ENCODE measurements at regions of chr22 and their contacts with region 1.

Region 1: GRCh38 chr22:41666661-41667258 is 21.9 kb downstream of the SNU13 start:
- DNase-seq: peak; percentile 96
- H3K4me3 Mint-ChIP-seq: peak overlapping the region; percentile 86
- H3K27ac Mint-ChIP-seq: peak overlapping the region; percentile 98
- H3K4me1 Mint-ChIP-seq: peaks cover 21% of the 10 kb centered on the region
- H3K27me3 Mint-ChIP-seq: no peaks in the 10 kb centered on the region

Region 2: GRCh38 chr22:41589391-41590241 is 77.1 kb before region 1 on chr22 and contains the start of gene PMM1:
- CTCF ChIA-PET with region 1: interaction called, 13 read pairs
- POLR2A ChIA-PET with region 1: no interaction called
- DNase-seq: peak; percentile 100
- H3K4me3 Mint-ChIP-seq: peak within 1 kb of the TSS; percentile 96
- H3K27ac Mint-ChIP-seq: peak within 1 kb of the TSS; percentile 87
- H3K4me1 Mint-ChIP-seq: peaks cover 26% of the 10 kb centered on the region
- H3K27me3 Mint-ChIP-seq: no peaks in the 10 kb centered on the region
- total RNA-seq, gene PMM1: 44.4 to 46.2 TPM

Region 3: GRCh38 chr22:41656556-41656955 is 10.2 kb before region 1 on chr22:
- CTCF ChIA-PET with region 1: interaction called, 16 read pairs
- POLR2A ChIA-PET with region 1: interaction called, 11 read pairs
- DNase-seq: no peak
- H3K4me3 Mint-ChIP-seq: no peak overlapping the region
- H3K27ac Mint-ChIP-seq: no peak overlapping the region
- H3K4me1 Mint-ChIP-seq: peaks cover 7% of the 10 kb centered on the region
- H3K27me3 Mint-ChIP-seq: no peaks in the 10 kb centered on the region

Region 4: DNA sequence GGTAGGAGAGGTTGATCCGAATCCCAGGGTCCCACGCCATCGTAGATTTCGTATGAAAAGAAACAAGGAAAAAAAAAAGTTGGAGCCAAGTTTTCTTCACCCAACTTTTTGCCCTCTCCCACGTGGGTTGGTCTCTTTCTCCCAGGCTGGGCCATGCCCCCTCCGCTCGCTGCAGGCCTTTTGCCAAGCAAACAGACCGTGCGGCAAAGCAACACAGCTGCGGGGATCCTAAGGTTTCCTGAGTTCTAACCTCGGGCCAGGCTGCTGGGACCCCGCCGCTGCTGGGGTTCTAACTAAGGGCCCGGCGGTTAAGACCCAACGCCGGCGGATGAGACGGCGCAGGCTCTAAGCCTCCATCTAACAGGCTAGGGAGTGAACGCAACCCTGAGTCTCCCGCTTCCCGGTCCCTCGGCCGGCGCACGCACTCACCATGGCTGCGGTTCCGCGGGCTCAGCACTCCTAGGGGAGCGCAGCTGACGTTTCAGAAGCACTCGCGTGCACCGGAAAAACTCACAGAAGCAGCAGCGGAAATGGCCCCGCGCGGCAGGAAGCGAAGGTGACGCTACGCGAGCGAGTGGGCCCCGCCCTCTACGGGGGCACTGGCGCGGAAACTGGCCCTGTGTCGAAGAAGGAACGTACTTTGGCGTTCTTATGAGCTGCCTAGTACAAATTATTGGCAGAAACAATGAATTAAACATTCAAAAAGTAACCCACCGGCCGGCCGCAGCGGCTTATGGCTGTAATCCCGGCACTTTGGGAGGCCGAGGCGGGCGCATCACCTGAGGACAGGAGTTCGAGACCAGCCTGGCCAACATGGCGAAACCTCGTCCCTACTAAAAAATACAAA is 21.8 kb after region 1 on chr22 and contains the start of gene SNU13:
- CTCF ChIA-PET with region 1: interaction called, 55 read pairs
- POLR2A ChIA-PET with region 1: interaction called, 76 read pairs
- DNase-seq: peak; percentile 95
- H3K4me3 Mint-ChIP-seq: peak within 1 kb of the TSS; percentile 95
- H3K27ac Mint-ChIP-seq: peak within 1 kb of the TSS; percentile 92
- H3K4me1 Mint-ChIP-seq: peaks cover 40% of the 10 kb centered on the region
- H3K27me3 Mint-ChIP-seq: no peaks in the 10 kb centered on the region
- total RNA-seq, gene SNU13: 166 to 176 TPM

Region 5: DNA sequence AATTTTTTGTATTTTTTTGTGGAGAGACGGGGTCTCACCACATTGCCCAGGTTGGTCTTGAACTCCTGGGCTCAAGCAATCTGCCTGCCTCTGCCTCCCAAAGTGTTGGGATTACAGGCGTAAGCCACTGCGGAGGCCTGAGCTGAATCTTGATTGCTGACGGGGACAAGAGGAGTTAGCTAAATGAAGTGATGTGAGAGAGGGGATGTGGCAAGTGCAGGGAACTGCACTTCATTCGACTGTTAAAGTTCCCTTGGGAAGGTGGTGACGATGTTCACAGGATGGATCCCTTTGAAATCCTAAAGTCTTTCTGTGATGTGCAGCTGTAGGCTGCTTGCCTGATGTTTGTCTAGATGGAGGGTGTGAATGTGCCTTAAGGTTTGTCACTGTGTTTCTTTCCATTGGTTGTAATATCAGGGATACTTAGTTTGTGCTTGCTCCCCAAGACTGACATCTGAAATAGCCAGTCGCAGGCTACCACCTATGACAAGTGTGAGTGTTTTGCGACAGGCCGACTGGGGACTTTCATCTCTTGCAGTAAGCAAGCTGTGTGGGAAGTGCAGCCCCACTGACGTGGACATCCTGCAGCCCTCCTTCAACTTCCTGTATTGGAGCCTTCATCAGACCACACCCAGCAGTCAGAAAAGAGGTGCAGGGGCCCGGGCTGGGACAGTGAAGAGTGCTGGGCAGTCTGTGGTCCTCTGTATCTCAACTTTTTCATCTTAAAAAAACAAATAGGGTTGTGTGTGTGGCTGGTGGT is 114.2 kb after region 1 on chr22:
- CTCF ChIA-PET with region 1: interaction called, 20 read pairs
- POLR2A ChIA-PET with region 1: interaction called, 10 read pairs
- DNase-seq: peak; percentile 96
- H3K4me3 Mint-ChIP-seq: peak overlapping the region; percentile 85
- H3K27ac Mint-ChIP-seq: peak overlapping the region; percentile 97
- H3K4me1 Mint-ChIP-seq: peaks cover 46% of the 10 kb centered on the region
- H3K27me3 Mint-ChIP-seq: no peaks in the 10 kb centered on the region

Region 6: GRCh38 chr22:41857155-41857859 is 190.5 kb after region 1 on chr22:
- CTCF ChIA-PET with region 1: interaction called, 12 read pairs
- POLR2A ChIA-PET with region 1: interaction called, 4 read pairs
- DNase-seq: peak; percentile 77
- H3K4me3 Mint-ChIP-seq: no peak overlapping the region
- H3K27ac Mint-ChIP-seq: peak overlapping the region; percentile 86
- H3K4me1 Mint-ChIP-seq: peaks cover 72% of the 10 kb centered on the region
- H3K27me3 Mint-ChIP-seq: no peaks in the 10 kb centered on the region

Measured in activated CD4-positive, alpha-beta memory T cell treated with anti-CD3 and anti-CD28 coated beads, Interleukin-2, amount 10 ng/mL, durations not matched to agents 7 days and 5 days (primary cell).